A673 (cell line): ENCODE measurements at regions of chr13 and their contacts with region 1.

Region 1: DNA sequence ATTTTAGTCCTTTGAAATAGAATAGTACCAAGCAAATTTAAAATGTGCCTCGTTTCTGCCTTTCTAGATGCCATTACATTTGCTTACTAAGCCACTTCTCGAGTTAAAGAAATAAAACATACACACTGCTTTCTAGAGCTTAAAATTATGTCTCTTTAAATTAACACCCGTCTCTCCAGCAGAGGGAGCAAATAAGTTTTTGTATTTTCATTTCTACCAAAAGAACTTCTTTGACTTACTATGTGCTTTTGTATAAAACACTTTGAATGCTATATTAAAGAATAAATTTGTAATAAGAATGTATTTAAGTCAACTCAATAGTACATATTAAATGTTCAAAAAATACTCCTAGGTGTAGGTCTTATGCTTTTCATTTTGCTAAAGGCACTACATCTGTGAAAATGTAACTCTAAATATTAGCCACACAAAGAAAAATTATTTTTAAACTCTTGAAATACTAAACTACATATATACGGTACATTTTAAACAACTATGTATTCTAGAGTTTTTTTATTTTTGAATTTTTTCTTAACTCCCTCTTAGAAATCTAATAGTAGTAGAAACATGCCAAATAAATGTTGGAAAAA is 269.3 kb upstream of the MIR17HG start:
- DNase-seq: peak; percentile 29
- H3K4me3 ChIP-seq: no peak overlapping the region
- H3K27ac ChIP-seq: no peak overlapping the region
- H3K4me1 ChIP-seq: no peaks in the 10 kb centered on the region
- H3K27me3 ChIP-seq: peaks cover 90% of the 10 kb centered on the region
- CTCF ChIP-seq: peak; percentile 65

Region 2: GRCh38 chr13:91185294-91185863 is 107.2 kb after region 1 on chr13:
- CTCF ChIA-PET with region 1: interaction called, 11 read pairs
- POLR2A ChIA-PET with region 1: no interaction called
- intact Hi-C with region 1: loop called (anchors 2 kb)
- DNase-seq: peak; percentile 31
- H3K4me3 ChIP-seq: no peak overlapping the region
- H3K27ac ChIP-seq: no peak overlapping the region
- H3K4me1 ChIP-seq: no peaks in the 10 kb centered on the region
- H3K27me3 ChIP-seq: peaks cover 83% of the 10 kb centered on the region
- CTCF ChIP-seq: peak; percentile 54

Region 3: GRCh38 chr13:91247768-91248167 is 169.6 kb after region 1 on chr13:
- CTCF ChIA-PET with region 1: interaction called, 4 read pairs
- POLR2A ChIA-PET with region 1: no interaction called
- intact Hi-C with region 1: loop called (anchors 5 kb)
- DNase-seq: peak; percentile 6
- H3K4me3 ChIP-seq: no peak overlapping the region
- H3K27ac ChIP-seq: no peak overlapping the region
- H3K4me1 ChIP-seq: no peaks in the 10 kb centered on the region
- H3K27me3 ChIP-seq: peaks cover 94% of the 10 kb centered on the region
- CTCF ChIP-seq: peak; percentile 53; the same call in 1 of the 2 replicates